Ovary (tissue), 10 donors: ENCODE measurements at regions of chr22 and their contacts with region 1.

Region 1: DNA sequence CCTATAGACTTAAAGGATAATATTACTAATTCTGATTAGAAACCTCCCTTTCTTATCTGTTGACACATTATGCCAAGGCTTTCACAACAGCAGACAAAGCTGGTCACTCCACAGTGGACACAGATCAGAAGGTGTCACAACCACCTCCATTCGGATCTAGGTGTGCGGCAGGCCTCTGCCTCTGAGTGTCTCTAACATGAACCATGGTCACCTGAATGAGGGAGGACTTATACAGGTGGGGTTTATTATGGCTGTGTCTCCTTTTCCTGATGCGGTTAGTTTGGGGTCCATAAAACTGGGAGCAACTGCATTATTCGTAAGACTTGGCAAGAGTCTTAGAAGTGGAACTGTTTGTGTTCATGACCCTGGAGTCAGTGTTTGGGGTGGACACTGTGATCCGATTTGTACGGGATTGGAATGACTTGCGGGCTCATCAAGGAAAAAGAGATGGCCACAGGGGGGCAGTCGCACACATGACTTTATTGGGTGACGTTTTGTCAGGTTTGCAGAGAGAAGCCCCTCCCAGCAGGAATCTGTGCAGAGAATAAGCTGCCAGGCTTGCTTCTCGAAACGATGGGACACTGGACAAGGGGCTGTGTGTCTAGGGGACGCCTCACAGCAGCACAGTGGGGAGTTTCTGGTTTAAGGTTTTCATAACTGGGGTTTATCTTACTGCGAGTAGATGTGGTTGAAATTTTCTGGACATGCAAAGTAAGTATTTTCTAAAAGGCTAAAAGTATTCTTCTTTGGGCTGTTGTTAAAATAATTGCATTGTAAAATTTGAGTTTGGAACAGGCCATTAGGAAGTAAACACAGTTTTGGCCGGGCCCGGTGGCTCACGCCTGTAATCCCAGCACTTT is 90.6 kb downstream of the GAB4 start:
- DNase-seq: peak; percentile 33 to 60 (median 41)
- H3K4me3 ChIP-seq: no peak overlapping the region
- H3K27ac ChIP-seq: no peak overlapping the region
- H3K4me1 ChIP-seq: no peaks in the 10 kb centered on the region
- H3K27me3 ChIP-seq: no peaks in the 10 kb centered on the region
- CTCF ChIP-seq: no peak
- EP300 ChIP-seq: no peak
- POLR2A ChIP-seq: no peak

Region 2: DNA sequence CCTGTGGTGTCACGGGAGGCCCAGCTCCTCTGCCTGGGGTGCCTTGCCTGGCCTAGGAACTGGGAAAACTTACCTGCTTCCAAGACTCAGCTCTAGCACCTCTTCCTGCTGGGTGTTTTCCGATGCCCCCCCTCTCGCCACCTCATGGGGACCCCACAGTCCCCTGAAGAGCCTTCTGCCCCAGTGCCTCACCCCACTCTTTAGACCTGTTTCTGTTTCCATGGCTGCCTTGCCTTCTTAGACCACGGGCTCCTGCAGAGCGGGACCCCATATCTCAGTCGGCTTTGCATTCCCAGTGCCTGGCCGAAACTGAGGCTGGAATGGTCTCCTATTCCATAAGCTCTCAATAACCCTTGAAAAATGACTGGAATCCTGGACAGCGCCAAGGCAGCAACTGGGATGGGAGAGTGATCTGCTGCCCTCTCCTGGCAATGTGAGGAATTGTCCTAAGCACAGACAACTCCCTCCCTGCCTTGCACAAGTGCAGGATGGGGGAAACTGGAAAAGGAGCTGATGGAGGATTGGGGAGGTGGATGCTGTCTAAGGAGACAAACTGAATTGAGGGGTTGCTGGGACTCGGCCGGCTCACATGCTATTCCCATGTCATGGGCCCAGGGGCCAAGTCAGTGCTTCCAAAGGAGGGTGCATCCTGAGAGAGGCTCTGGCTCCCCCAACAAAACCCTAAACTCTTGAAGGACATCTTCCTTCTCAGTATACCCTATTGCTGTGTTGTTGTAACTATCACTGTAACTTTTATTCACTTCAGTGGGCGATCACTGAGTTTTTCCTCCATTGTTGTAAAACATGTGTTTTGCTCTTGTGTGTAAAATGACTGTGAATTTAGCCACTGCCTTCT is 140.8 kb after region 1 on chr22:
- intact Hi-C with region 1: loop called in 1 of 4 experiments (anchors 5 kb)
- DNase-seq: peak; percentile 57 to 68 (median 60)
- H3K4me3 ChIP-seq: no peak overlapping the region
- H3K27ac ChIP-seq: no peak overlapping the region
- H3K4me1 ChIP-seq: no peaks in the 10 kb centered on the region
- H3K27me3 ChIP-seq: no peaks in the 10 kb centered on the region
- CTCF ChIP-seq: peak; percentile 49 to 63 (median 61)
- EP300 ChIP-seq: no peak
- POLR2A ChIP-seq: no peak